CD8-positive, alpha-beta memory T cell (primary cell): ENCODE measurements at regions of chr6 and their contacts with region 1.

Region 1: DNA sequence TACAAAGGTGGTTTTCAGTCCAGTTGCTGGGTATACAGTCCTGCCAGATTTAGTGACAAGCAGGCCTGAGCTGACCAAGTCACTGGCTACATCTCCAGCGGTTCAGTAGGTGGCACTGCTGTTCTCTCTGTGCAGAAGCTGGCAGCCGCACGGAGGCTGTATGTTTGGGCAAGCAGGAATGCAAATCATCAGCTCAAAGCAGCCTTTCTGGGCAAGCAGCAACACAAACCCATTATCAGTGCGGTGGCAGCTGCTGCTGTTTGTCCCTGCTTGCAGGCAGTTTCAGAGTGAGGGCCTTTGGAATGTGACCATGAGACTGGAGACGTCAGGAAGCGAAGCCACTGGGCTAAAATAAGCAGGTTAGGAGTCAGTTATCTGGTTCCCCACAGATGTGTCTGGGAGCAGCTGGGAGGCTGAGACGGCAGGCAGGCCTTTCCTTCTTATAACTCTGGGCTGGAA is 72.5 kb downstream of the TXLNB start:
- DNase-seq: peak; percentile 37 to 80 (median 55)
- H3K4me3 ChIP-seq: no peak overlapping the region
- H3K4me3 Mint-ChIP-seq: peak overlapping the region in 3 of 7 donors; percentile 40 to 81 (median 62)
- H3K27ac ChIP-seq: no peak overlapping the region
- H3K27ac Mint-ChIP-seq: peak overlapping the region in 7 of 8 donors; percentile 31 to 91 (median 85)
- H3K4me1 ChIP-seq: peaks cover 7% of the 10 kb centered on the region
- H3K4me1 Mint-ChIP-seq: peaks cover 8 to 12% (median 12%) of the 10 kb centered on the region in 3 donors
- H3K27me3 ChIP-seq: no peaks in the 10 kb centered on the region
- H3K27me3 Mint-ChIP-seq: no peaks in the 10 kb centered on the region

Region 2: GRCh38 chr6:139134817-139135581 is 84.3 kb before region 1 on chr6 and contains the start of gene HECA:
- CTCF ChIA-PET with region 1: interaction called, 10 read pairs
- POLR2A ChIA-PET with region 1: no interaction called
- DNase-seq: peak; percentile 99 to 100 (median 100)
- H3K4me3 ChIP-seq: peak within 1 kb of the TSS; percentile 86
- H3K4me3 Mint-ChIP-seq: peak within 1 kb of the TSS; percentile 85 to 97 (median 93)
- H3K27ac ChIP-seq: peak within 1 kb of the TSS; percentile 92
- H3K27ac Mint-ChIP-seq: peak within 1 kb of the TSS; percentile 98 to 100 (median 98)
- H3K4me1 ChIP-seq: peaks cover 50% of the 10 kb centered on the region
- H3K4me1 Mint-ChIP-seq: peaks cover 59 to 76% (median 66%) of the 10 kb centered on the region in 3 donors
- H3K27me3 ChIP-seq: no peaks in the 10 kb centered on the region
- H3K27me3 Mint-ChIP-seq: peaks cover 0 to 2% of the 10 kb centered on the region in 2 donors
- total RNA-seq, gene HECA: 63.4 to 64.6 TPM

Region 3: GRCh38 chr6:139153855-139154254 is 65.4 kb before region 1 on chr6:
- CTCF ChIA-PET with region 1: no interaction called
- POLR2A ChIA-PET with region 1: no interaction called
- DNase-seq: no peak
- H3K4me3 ChIP-seq: no peak overlapping the region
- H3K4me3 Mint-ChIP-seq: peak overlapping the region in 3 of 7 donors; percentile 5 to 36 (median 10)
- H3K27ac ChIP-seq: no peak overlapping the region
- H3K27ac Mint-ChIP-seq: peak overlapping the region in 2 of 8 donors; percentile 15 to 17
- H3K4me1 ChIP-seq: peaks cover 80% of the 10 kb centered on the region
- H3K4me1 Mint-ChIP-seq: peaks cover 79 to 91% (median 89%) of the 10 kb centered on the region in 3 donors
- H3K27me3 ChIP-seq: no peaks in the 10 kb centered on the region
- H3K27me3 Mint-ChIP-seq: no peaks in the 10 kb centered on the region

Region 4: DNA sequence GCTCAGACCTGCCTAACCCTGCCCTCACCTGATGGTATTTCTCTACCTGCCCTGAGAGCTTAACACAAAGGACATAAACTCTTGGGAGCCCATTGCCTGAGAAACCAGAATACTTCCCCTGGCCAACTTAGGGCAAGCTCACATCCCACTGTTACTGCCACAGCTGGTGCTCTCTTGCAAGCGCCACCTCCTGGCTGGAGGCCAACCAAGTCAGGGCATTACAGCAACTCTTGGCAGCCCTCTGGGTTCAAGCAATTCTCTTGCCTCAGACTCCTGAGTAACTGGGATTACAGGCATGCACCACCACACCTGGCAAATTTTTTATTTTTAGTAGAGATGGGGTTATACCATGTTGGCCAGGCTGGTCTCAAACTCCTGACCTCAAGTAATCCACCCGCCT is 14.3 kb before region 1 on chr6:
- CTCF ChIA-PET with region 1: interaction called, 10 read pairs
- POLR2A ChIA-PET with region 1: no interaction called
- DNase-seq: no peak
- H3K4me3 ChIP-seq: no peak overlapping the region
- H3K4me3 Mint-ChIP-seq: no peak overlapping the region
- H3K27ac ChIP-seq: no peak overlapping the region
- H3K27ac Mint-ChIP-seq: no peak overlapping the region
- H3K4me1 ChIP-seq: no peaks in the 10 kb centered on the region
- H3K4me1 Mint-ChIP-seq: peaks cover 6 to 10% (median 8%) of the 10 kb centered on the region in 3 donors
- H3K27me3 ChIP-seq: no peaks in the 10 kb centered on the region
- H3K27me3 Mint-ChIP-seq: peaks cover 0 to 6% of the 10 kb centered on the region in 2 donors

Region 5: DNA sequence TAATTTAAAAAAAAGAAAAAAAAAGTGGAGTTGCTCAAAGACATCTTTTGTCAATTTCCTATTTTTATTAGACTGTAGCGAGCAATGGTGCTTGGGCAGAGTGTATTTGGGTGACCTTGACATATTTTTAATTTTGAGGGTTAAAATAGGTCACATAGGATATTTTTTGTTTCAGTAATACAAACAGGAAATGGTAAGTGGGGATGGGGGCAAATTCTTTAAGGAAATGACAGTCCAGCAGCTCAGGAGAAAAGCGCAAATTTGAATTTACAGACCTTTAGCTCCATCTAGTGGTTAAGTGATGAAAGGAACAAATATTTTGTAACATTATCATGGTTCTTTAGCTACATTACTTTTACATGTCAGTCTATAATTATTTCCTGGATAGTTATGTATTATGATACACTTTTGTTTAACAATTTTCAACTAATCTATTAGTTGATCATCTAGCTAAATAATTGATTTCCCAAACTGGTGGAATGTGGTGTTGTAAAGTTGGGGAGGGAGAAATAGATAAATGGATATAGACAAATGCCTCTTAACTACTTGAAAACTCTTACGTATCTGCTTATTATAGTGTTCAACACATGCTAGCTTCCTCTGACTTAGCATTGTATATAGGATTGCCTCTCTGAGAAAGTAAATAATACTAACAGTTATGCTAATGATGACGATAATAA is 145.1 kb after region 1 on chr6:
- CTCF ChIA-PET with region 1: interaction called, 88 read pairs
- POLR2A ChIA-PET with region 1: interaction called, 11 read pairs
- DNase-seq: peak in 2 of 5 donors; percentile 60 to 63
- H3K4me3 ChIP-seq: no peak overlapping the region
- H3K4me3 Mint-ChIP-seq: peak overlapping the region in 6 of 7 donors; percentile 4 to 43 (median 26)
- H3K27ac ChIP-seq: no peak overlapping the region
- H3K27ac Mint-ChIP-seq: peak overlapping the region in 4 of 8 donors; percentile 12 to 77 (median 62)
- H3K4me1 ChIP-seq: peaks cover 14% of the 10 kb centered on the region
- H3K4me1 Mint-ChIP-seq: peaks cover 23 to 61% (median 45%) of the 10 kb centered on the region in 3 donors
- H3K27me3 ChIP-seq: no peaks in the 10 kb centered on the region
- H3K27me3 Mint-ChIP-seq: no peaks in the 10 kb centered on the region

Region 6: GRCh38 chr6:139500977-139501376 is 281.7 kb after region 1 on chr6:
- CTCF ChIA-PET with region 1: no interaction called
- POLR2A ChIA-PET with region 1: no interaction called
- DNase-seq: no peak
- H3K4me3 ChIP-seq: no peak overlapping the region
- H3K4me3 Mint-ChIP-seq: no peak overlapping the region
- H3K27ac ChIP-seq: no peak overlapping the region
- H3K27ac Mint-ChIP-seq: no peak overlapping the region
- H3K4me1 ChIP-seq: no peaks in the 10 kb centered on the region
- H3K4me1 Mint-ChIP-seq: no peaks in the 10 kb centered on the region
- H3K27me3 ChIP-seq: no peaks in the 10 kb centered on the region
- H3K27me3 Mint-ChIP-seq: peaks cover 0 to 2% of the 10 kb centered on the region in 2 donors

Region 7: GRCh38 chr6:139753198-139753861 is 534.0 kb after region 1 on chr6:
- CTCF ChIA-PET with region 1: no interaction called
- POLR2A ChIA-PET with region 1: no interaction called
- DNase-seq: no peak
- H3K4me3 ChIP-seq: no peak overlapping the region
- H3K4me3 Mint-ChIP-seq: no peak overlapping the region
- H3K27ac ChIP-seq: no peak overlapping the region
- H3K27ac Mint-ChIP-seq: no peak overlapping the region
- H3K4me1 ChIP-seq: no peaks in the 10 kb centered on the region
- H3K4me1 Mint-ChIP-seq: no peaks in the 10 kb centered on the region
- H3K27me3 ChIP-seq: no peaks in the 10 kb centered on the region
- H3K27me3 Mint-ChIP-seq: peaks cover 0 to 3% of the 10 kb centered on the region in 2 donors